Panc1 (cell line): ENCODE measurements at regions of chr12 and their contacts with region 1.

Region 1: DNA sequence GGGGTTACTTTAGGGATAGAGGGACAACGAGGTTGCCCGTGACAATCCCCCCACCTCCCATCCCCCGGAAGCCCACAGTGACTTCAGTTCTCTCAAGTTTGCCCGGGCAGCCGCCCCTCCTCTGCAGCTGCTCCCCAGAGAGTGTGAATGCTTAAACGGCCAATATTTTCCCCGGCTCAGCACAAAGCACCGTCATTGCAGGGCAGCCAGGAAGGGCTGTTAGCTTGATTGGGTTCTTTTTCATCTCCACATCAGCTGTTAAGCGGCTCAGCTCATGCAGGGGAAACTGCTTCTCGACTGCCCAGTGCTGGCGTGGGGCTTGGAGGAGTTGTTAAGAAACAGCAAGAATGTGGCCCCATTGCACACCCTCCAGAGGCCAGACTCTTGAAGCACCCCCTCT is 120.5 kb upstream of the NCOR2 start:
- DNase-seq: no peak
- ATAC-seq: peak; percentile 18; the same call in 1 of the 2 replicates
- H3K4me3 ChIP-seq: no peak overlapping the region
- H3K27ac ChIP-seq: peak overlapping the region; percentile 98
- H3K4me1 ChIP-seq: peaks cover 58% of the 10 kb centered on the region
- H3K27me3 ChIP-seq: no peaks in the 10 kb centered on the region
- CTCF ChIP-seq: no peak

Region 2: GRCh38 chr12:124674937-124675336 is 13.0 kb before region 1 on chr12:
- CTCF ChIA-PET with region 1: no interaction called
- POLR2A ChIA-PET with region 1: no interaction called
- in situ Hi-C with region 1: no loop called
- intact Hi-C with region 1: no loop called
- DNase-seq: no peak
- ATAC-seq: no peak
- H3K4me3 ChIP-seq: no peak overlapping the region
- H3K27ac ChIP-seq: peak overlapping the region; percentile 6; the same call in 1 of the 2 replicates
- H3K4me1 ChIP-seq: peaks cover 33% of the 10 kb centered on the region
- H3K27me3 ChIP-seq: no peaks in the 10 kb centered on the region
- CTCF ChIP-seq: no peak

Region 3: GRCh38 chr12:124720004-124720680 is 32.2 kb after region 1 on chr12:
- CTCF ChIA-PET with region 1: no interaction called
- POLR2A ChIA-PET with region 1: interaction called, 14 read pairs
- in situ Hi-C with region 1: no loop called
- intact Hi-C with region 1: loop called (anchors 5 kb)
- DNase-seq: no peak
- ATAC-seq: peak; percentile 40
- H3K4me3 ChIP-seq: no peak overlapping the region
- H3K27ac ChIP-seq: peak overlapping the region; percentile 69
- H3K4me1 ChIP-seq: peaks cover 39% of the 10 kb centered on the region
- H3K27me3 ChIP-seq: no peaks in the 10 kb centered on the region
- CTCF ChIP-seq: peak; percentile 13; the same call in 1 of the 2 replicates